AG04450 (cell line): ENCODE measurements at regions of chr1 and their contacts with region 1.

Region 1: DNA sequence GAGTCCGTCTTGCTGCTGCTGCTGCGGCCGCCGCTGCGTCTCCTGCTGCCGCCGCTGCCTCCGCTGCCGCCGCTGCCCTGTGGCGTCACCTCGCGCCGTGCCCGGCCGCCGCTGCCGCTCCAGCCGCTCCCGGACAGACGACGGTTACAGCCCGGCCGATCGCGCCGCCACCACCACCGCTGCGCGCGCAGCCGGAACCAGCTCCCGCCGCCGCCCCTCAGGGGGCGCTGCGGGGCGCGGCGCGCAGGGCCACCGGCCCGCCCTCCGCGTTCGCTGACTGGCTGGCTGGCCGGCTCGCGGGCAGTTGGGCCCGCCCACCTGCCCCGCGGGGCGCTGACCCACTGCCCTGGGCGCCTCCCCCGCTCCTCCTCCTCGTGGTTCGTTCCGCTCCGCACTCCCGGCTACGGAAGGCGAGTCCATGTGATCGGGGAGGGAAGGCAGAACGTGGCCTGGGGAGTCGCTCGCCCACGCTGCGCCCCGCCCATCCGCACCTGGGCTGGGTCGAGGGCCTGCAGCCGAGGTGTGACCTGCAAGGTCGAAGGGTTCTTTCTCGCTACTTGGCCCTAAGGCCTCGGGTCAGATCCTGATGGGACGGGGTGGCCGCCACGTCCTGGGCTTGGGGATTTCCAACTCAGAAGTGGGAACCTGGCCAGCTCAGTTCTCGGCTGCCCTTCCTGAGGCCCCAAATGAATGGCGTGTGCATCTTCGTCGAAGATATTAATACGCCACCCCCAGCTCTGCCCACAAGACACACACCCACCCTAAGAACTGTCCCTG is at the start of gene PTP4A2:
- DNase-seq: peak; percentile 76
- H3K4me3 ChIP-seq: peak within 1 kb of the TSS; percentile 98
- H3K27ac ChIP-seq: peak within 1 kb of the TSS; percentile 81
- H3K27me3 ChIP-seq: no peaks in the 10 kb centered on the region
- CTCF ChIP-seq: peak; percentile 19; the same call in 1 of the 2 replicates
- polyA plus RNA-seq, gene PTP4A2: 536 and 658 TPM in 2 replicates

Region 2: GRCh38 chr1:31926853-31927660 is 11.3 kb before region 1 on chr1:
- CTCF ChIA-PET with region 1: interaction called, 10 read pairs
- POLR2A ChIA-PET with region 1: interaction called, 7 read pairs
- DNase-seq: no peak
- H3K4me3 ChIP-seq: no peak overlapping the region
- H3K27ac ChIP-seq: no peak overlapping the region
- H3K27me3 ChIP-seq: no peaks in the 10 kb centered on the region
- CTCF ChIP-seq: no peak

Region 3: GRCh38 chr1:31955917-31956736 is 17.8 kb after region 1 on chr1:
- CTCF ChIA-PET with region 1: interaction called, 40 read pairs
- POLR2A ChIA-PET with region 1: interaction called, 38 read pairs
- DNase-seq: peak; percentile 98
- H3K4me3 ChIP-seq: no peak overlapping the region
- H3K27ac ChIP-seq: peak overlapping the region; percentile 99
- H3K27me3 ChIP-seq: no peaks in the 10 kb centered on the region
- CTCF ChIP-seq: peak; percentile 64